Left colon (tissue), 2 donors: ENCODE measurements at regions of chr11 and their contacts with region 1.

Region 1: GRCh38 chr11:75896843-75897419 is 81.9 kb downstream of the UVRAG start:
- DNase-seq: no peak
- ATAC-seq: peak; percentile 62

Region 2: DNA sequence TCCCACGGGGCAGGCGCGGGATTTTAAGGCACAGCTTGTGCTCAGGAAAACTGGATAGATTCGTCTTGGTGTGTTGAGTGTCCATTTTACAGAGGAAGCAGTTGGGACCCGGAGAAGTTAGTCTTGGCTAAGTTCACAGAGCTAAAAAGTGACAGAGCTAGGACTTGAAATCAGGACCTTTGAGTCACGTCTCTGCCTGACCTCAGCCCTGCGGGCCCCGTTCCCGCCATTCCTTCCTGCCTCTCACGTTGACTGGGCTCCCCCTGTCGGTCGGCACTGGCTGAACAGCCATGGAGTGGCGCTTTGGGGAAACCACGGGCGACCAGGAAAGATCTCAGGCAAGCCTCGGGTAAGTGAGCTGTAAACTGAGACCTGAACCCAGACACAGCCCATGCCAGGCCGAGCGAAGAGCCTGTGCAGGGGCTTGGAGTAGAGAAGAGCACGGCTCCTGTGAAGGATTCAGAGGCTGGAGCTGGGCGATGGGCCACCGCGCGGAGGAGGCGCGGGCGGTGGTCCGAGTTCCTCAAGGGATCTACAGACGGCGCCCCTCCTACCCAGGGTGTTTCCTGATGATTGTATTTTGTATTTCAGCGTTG is 255.3 kb after region 1 on chr11:
- intact Hi-C with region 1: loop called in 1 of 2 experiments (anchors 2 kb)
- DNase-seq: peak; percentile 79 to 89
- ATAC-seq: peak; percentile 20

Region 3: GRCh38 chr11:76318744-76319384 is 421.9 kb after region 1 on chr11:
- intact Hi-C with region 1: loop called in 1 of 2 experiments (anchors 5 kb)
- DNase-seq: peak; percentile 58 to 91
- ATAC-seq: peak; percentile 89